A673 (cell line): ENCODE measurements at regions of chr10 and their contacts with region 1.

Region 1: GRCh38 chr10:111481261-111481826 is 404.5 kb downstream of the ADRA2A start:
- DNase-seq: peak; percentile 36
- H3K4me3 ChIP-seq: no peak overlapping the region
- H3K27ac ChIP-seq: no peak overlapping the region
- H3K4me1 ChIP-seq: no peaks in the 10 kb centered on the region
- H3K27me3 ChIP-seq: no peaks in the 10 kb centered on the region
- CTCF ChIP-seq: no peak

Region 2: DNA sequence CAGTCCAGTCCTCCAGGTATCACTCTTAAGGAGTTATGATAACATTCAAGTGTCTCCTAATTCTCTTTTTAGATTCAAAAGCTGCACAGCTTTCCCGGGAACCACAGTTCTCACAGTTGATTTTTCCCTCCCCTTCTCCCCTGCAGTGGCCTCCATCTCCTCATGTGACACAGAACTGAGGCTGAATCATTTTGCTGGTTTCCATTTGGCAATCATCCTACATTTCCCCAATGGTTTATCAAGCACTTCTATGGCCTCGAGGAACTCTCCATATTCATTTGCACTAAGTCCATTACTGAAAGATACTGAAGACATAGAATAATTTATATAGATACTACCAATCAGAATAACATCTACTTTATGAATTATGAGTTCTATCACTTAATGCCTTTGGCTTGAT is 217.4 kb after region 1 on chr10:
- CTCF ChIA-PET with region 1: no interaction called
- POLR2A ChIA-PET with region 1: no interaction called
- intact Hi-C with region 1: no loop called
- DNase-seq: no peak
- H3K4me3 ChIP-seq: no peak overlapping the region
- H3K27ac ChIP-seq: no peak overlapping the region
- H3K4me1 ChIP-seq: no peaks in the 10 kb centered on the region
- H3K27me3 ChIP-seq: peaks cover 19% of the 10 kb centered on the region
- CTCF ChIP-seq: no peak

Region 3: GRCh38 chr10:112461029-112461887 is 979.9 kb after region 1 on chr10:
- CTCF ChIA-PET with region 1: no interaction called
- POLR2A ChIA-PET with region 1: interaction called, 13 read pairs
- intact Hi-C with region 1: no loop called
- DNase-seq: peak; percentile 62
- H3K4me3 ChIP-seq: no peak overlapping the region
- H3K27ac ChIP-seq: peak overlapping the region; percentile 81
- H3K4me1 ChIP-seq: no peaks in the 10 kb centered on the region
- H3K27me3 ChIP-seq: no peaks in the 10 kb centered on the region
- CTCF ChIP-seq: no peak